HepG2 (cell line): ENCODE measurements at regions of chr19 and their contacts with region 1.

Region 1: GRCh38 chr19:2475702-2476450 is at the start of gene GADD45B:
- DNase-seq: peak; percentile 93
- ATAC-seq: peak; percentile 56
- H3K4me3 ChIP-seq: peak within 1 kb of the TSS; percentile 92 to 100 (median 98)
- H3K27ac ChIP-seq: peak within 1 kb of the TSS; percentile 56
- H3K4me1 ChIP-seq: peaks cover 33% of the 10 kb centered on the region
- H3K27me3 ChIP-seq: no peaks in the 10 kb centered on the region; a peak in 2 of 5 replicates
- CTCF ChIP-seq: no peak
- EP300 ChIP-seq: no peak; a peak in 2 of 4 replicates
- POLR2A ChIP-seq: peak; percentile 100
- RAD21 ChIP-seq: peak; percentile 36; the same call in 1 of the 2 replicates
- total RNA-seq, gene GADD45B: 3.2 and 4.6 TPM in 2 replicates

Region 2: DNA sequence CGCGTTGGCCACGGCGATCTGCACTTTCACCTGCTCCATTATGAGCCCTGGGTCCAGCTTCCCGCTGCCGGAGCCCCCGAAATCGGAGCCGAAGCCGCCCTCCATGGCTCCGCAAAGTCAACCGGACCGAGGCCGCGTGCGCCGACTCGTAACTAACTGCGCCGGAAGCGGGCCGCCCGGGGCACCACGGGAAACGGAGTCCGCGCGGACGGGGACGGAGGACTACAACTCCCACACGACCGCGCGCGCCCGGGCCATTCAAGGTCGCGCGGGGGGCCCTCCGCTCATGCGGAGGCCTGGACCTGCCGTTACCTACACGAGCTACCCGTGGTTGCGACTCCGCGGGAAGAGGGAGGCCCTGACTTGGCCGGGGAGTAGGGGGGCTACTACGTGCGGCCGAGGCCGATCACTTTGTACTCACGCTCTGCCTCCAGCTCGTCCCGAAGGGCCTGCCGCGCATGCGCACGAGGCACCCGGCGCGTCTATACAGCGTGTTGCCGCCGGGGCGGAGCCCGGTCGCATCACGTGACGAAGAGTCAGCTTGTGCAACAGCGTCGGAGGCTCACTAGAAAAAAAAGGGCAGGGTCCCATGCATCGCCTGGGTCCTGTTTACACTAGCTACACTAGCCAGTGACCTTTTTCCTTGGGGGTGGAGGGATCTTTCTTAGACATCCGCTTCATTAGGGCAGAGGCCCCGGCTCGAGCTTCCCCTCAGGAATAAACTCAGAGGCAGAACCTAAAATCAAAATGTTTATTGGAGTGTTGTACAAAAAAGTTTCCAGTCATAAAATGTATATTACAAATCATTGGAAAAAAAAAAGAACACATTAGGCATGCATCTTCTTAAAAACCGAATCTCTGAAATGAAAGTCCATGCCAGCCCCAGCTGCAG is 48.2 kb before region 1 on chr19 and contains the start of gene TIMM13:
- CTCF ChIA-PET with region 1: no interaction called
- POLR2A ChIA-PET with region 1: interaction called, 20 read pairs
- in situ Hi-C with region 1: no loop called
- intact Hi-C with region 1: no loop called
- DNase-seq: peak; percentile 94
- ATAC-seq: peak; percentile 82
- H3K4me3 ChIP-seq: peak within 1 kb of the TSS; percentile 71 to 91 (median 90)
- H3K27ac ChIP-seq: peak within 1 kb of the TSS; percentile 98
- H3K4me1 ChIP-seq: peaks cover 23% of the 10 kb centered on the region
- H3K27me3 ChIP-seq: no peaks in the 10 kb centered on the region
- CTCF ChIP-seq: no peak; the same call in 1 of the 2 replicates
- EP300 ChIP-seq: peak in 1 of 2 experiments; percentile 53; a peak in 2 of 4 replicates
- POLR2A ChIP-seq: peak; percentile 76 to 78; a peak in 3 of 4 replicates
- RAD21 ChIP-seq: peak; percentile 55
- total RNA-seq, gene TIMM13: 108 and 116 TPM in 2 replicates

Region 3: DNA sequence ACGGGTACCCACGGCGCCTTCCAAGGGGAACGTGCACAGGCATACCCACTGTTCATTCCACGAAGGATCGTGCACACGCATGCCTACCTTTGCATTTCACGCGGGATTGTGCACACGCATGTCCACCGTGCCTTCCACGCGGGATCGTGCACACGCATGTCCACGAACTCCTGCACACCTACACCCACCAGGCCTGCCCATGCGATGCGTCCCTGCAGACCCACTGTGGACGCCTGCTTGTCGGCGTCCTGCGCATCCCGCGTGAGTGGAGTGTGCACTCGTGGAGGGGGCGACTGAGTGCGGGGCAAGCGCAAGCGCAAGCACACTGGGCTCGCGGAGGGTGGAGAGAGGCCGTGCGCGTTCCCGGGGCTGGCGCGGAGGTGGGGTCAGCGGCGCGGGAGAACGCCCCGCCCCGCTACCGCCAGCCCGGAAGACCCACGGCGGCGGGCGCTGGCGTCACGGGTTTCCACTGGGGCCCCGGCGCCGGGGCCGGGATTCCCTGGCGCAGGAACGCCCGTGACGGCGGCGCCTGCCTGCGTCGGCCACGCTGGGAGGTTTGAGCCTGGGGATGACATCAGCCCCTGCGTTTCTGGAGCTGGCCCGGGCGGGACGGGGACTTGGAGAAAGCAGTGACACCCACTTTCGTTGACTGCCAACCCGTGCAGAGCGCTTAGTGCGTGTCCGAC is 18.7 kb after region 1 on chr19:
- CTCF ChIA-PET with region 1: no interaction called
- POLR2A ChIA-PET with region 1: interaction called, 65 read pairs
- in situ Hi-C with region 1: no loop called
- intact Hi-C with region 1: no loop called
- DNase-seq: no peak
- ATAC-seq: peak; percentile 50
- H3K4me3 ChIP-seq: peak overlapping the region; percentile 55 to 80 (median 60)
- H3K27ac ChIP-seq: no peak overlapping the region
- H3K4me1 ChIP-seq: peaks cover 55% of the 10 kb centered on the region
- H3K27me3 ChIP-seq: peaks cover 17 to 71% of the 10 kb centered on the region in 2 experiments
- CTCF ChIP-seq: no peak
- EP300 ChIP-seq: no peak
- POLR2A ChIP-seq: no peak
- RAD21 ChIP-seq: no peak

Region 4: GRCh38 chr19:2524838-2525723 is 49.2 kb after region 1 on chr19:
- CTCF ChIA-PET with region 1: no interaction called
- POLR2A ChIA-PET with region 1: interaction called, 19 read pairs
- in situ Hi-C with region 1: no loop called
- intact Hi-C with region 1: loop called (anchors 5 kb)
- DNase-seq: peak; percentile 68
- ATAC-seq: peak; percentile 79
- H3K4me3 ChIP-seq: peak overlapping the region in 2 of 3 experiments; percentile 42 to 57; a peak in 5 of 6 replicates
- H3K27ac ChIP-seq: no peak overlapping the region
- H3K4me1 ChIP-seq: peaks cover 84% of the 10 kb centered on the region
- H3K27me3 ChIP-seq: no peaks in the 10 kb centered on the region
- CTCF ChIP-seq: no peak
- EP300 ChIP-seq: no peak
- POLR2A ChIP-seq: no peak
- RAD21 ChIP-seq: no peak

Region 5: GRCh38 chr19:2578901-2579677 is 103.2 kb after region 1 on chr19:
- CTCF ChIA-PET with region 1: interaction called, 23 read pairs
- POLR2A ChIA-PET with region 1: interaction called, 192 read pairs
- in situ Hi-C with region 1: no loop called
- intact Hi-C with region 1: loop called (anchors 1 kb)
- DNase-seq: peak; percentile 90
- ATAC-seq: peak; percentile 80
- H3K4me3 ChIP-seq: peak overlapping the region; percentile 54 to 71 (median 61)
- H3K27ac ChIP-seq: peak overlapping the region; percentile 91
- H3K4me1 ChIP-seq: peaks cover 54% of the 10 kb centered on the region
- H3K27me3 ChIP-seq: no peaks in the 10 kb centered on the region
- CTCF ChIP-seq: peak; percentile 97
- EP300 ChIP-seq: peak in 1 of 2 experiments; percentile 44; a peak in 2 of 4 replicates
- POLR2A ChIP-seq: peak in 1 of 2 experiments; percentile 59; a peak in 2 of 4 replicates
- RAD21 ChIP-seq: peak; percentile 95

Region 6: DNA sequence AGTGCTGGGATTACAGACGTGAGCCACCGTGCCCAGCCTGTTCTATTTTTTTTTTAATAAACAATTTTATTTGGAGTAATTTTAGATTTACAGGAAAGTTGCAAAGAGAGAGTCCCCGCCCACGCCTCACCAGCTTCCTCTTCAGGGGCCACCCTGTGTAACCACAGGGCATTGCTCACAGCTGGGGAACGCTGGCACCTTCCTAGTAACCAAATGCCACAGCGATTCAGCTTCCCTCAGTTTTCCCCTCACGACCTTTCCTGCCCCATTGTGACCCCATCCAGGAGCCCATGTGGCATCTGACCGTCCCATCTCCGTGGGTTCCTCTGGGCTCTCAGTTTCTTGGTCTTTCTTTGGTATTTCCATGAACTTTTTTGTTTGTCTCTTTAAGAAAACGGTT is 142.7 kb after region 1 on chr19:
- CTCF ChIA-PET with region 1: interaction called, 39 read pairs
- POLR2A ChIA-PET with region 1: interaction called, 25 read pairs
- in situ Hi-C with region 1: loop called (anchors 5 kb)
- intact Hi-C with region 1: loop called (anchors 1 kb)
- DNase-seq: no peak
- ATAC-seq: no peak
- H3K4me3 ChIP-seq: no peak overlapping the region
- H3K27ac ChIP-seq: no peak overlapping the region
- H3K4me1 ChIP-seq: peaks cover 52% of the 10 kb centered on the region
- H3K27me3 ChIP-seq: no peaks in the 10 kb centered on the region
- CTCF ChIP-seq: no peak
- EP300 ChIP-seq: no peak
- POLR2A ChIP-seq: no peak
- RAD21 ChIP-seq: no peak